ENCODE measurements at regions of chr6 and their contacts with region 1.

Region 1: DNA sequence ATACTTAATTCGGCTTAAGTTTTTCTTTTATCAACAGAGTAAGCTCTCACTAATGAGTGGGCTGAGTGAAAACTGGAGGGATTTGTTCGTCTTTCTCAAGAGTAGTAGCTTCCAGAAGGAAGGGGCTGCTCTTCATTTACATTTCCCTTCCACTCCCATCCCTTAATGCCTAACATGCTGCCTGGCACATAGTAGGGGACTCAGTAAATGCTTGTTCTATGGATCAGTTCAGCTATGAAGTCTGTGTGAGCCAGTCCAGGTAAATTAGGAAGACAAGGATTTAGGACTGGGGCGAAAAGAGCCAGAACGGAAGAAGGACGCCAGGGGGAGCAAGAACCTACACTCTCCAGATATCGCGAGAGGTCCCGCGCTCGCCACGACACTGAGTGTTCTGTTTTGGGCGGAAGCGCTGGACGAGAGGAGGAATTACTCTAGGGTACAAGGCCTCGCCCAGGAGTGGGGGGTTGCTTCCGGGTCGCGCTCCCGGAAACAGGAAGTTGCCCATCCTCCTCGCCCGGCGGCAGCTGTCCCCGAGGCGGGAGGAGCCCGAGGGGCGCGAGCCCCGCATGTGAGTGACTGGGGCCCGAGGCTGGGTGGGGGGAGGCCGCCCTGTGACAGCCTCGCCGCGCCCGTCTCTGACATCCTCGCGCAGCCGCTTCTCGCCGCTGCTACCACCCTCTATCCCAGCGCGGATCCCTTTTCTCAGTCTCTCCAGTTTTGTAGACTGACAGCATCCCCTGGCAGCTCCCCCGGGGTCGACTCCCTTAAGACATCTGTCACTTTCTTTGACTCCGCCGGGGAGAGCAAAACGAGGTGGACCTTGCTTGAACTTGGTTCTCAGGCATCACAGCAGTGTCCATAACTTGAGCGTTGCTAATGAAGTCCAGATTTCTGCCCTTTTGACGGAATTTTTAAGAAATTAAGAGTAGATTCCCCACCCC is at the start of gene C6orf89:
- DNase-seq: peak; percentile 92
- ATAC-seq: peak; percentile 98
- H3K4me3 ChIP-seq: peak within 1 kb of the TSS; percentile 99
- H3K27ac ChIP-seq: peak within 1 kb of the TSS; percentile 77
- H3K4me1 ChIP-seq: no peaks in the 10 kb centered on the region
- H3K27me3 ChIP-seq: no peaks in the 10 kb centered on the region
- CTCF ChIP-seq: peak; percentile 72 to 83 (median 79)
- EP300 ChIP-seq: no peak
- POLR2A ChIP-seq: peak; percentile 88
- RAD21 ChIP-seq: peak; percentile 24; the same call in 1 of the 2 replicates
- polyA plus RNA-seq, gene C6orf89: 10.8 to 11.4 TPM

Region 2: GRCh38 chr6:36874443-36875249 is 11.1 kb before region 1 on chr6 and contains the start of gene PPIL1:
- CTCF ChIA-PET with region 1: interaction called, 93 read pairs
- POLR2A ChIA-PET with region 1: interaction called, 19 read pairs
- RAD21 ChIA-PET with region 1: interaction called, 14 read pairs
- SMC1A ChIA-PET with region 1: interaction called, 52 read pairs
- in situ Hi-C with region 1: no loop called
- intact Hi-C with region 1: no loop called
- DNase-seq: peak; percentile 78
- ATAC-seq: peak; percentile 93
- H3K4me3 ChIP-seq: peak within 1 kb of the TSS; percentile 79
- H3K27ac ChIP-seq: peak within 1 kb of the TSS; percentile 78
- H3K4me1 ChIP-seq: peaks cover 6% of the 10 kb centered on the region; the same call in 1 of the 2 replicates
- H3K27me3 ChIP-seq: no peaks in the 10 kb centered on the region
- CTCF ChIP-seq: no peak
- EP300 ChIP-seq: no peak
- POLR2A ChIP-seq: peak; percentile 81
- RAD21 ChIP-seq: no peak
- polyA plus RNA-seq, gene PPIL1: 74.4 to 95.8 TPM

Region 3: DNA sequence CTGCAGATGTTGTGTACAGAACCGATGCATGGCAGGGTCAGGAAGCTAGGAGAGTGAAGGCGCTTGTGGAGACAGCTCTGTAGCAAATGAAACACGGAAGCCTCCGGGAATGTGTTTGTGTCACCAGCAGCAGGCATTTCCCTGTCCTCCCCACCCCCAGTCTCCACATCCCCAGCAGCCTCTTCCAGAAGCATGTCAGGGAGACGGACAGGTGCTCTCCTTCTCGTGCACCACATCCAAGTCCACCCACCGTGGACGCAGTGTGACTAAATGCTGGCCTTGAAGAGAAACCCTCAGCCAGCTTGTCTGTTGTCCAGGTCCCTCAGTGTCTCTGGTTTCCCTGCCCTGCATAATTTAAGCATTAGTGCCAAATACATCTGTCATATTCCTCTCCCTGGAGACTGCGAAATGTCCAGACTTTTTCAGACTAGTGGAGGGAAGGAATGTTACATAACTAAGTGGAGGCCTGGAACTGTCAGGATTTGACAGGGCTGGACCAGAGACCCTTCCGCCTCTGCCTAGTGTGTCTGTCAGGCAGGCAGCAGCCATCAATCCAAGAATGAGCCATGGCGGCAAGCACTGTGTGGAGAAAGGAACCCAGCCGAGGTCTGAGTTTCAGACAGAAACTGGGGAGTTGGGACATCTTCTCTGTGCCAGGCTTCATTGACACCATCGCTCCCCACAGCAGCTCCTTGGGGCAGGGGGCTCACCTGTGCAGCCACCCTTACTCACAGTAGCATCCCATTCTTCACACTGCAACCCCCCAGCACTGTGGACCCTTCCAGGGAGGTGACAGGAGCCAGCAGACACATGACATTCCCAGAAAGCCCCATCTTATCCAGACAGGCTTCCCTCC is 42.2 kb after region 1 on chr6:
- CTCF ChIA-PET with region 1: interaction called, 3 read pairs
- POLR2A ChIA-PET with region 1: interaction called, 4 read pairs
- RAD21 ChIA-PET with region 1: no interaction called
- SMC1A ChIA-PET with region 1: no interaction called
- in situ Hi-C with region 1: no loop called
- intact Hi-C with region 1: loop called (anchors 1 kb)
- DNase-seq: no peak
- ATAC-seq: no peak
- H3K4me3 ChIP-seq: no peak overlapping the region
- H3K27ac ChIP-seq: no peak overlapping the region
- H3K4me1 ChIP-seq: peaks cover 12% of the 10 kb centered on the region
- H3K27me3 ChIP-seq: no peaks in the 10 kb centered on the region
- CTCF ChIP-seq: no peak
- EP300 ChIP-seq: no peak
- POLR2A ChIP-seq: no peak
- RAD21 ChIP-seq: no peak

Region 4: DNA sequence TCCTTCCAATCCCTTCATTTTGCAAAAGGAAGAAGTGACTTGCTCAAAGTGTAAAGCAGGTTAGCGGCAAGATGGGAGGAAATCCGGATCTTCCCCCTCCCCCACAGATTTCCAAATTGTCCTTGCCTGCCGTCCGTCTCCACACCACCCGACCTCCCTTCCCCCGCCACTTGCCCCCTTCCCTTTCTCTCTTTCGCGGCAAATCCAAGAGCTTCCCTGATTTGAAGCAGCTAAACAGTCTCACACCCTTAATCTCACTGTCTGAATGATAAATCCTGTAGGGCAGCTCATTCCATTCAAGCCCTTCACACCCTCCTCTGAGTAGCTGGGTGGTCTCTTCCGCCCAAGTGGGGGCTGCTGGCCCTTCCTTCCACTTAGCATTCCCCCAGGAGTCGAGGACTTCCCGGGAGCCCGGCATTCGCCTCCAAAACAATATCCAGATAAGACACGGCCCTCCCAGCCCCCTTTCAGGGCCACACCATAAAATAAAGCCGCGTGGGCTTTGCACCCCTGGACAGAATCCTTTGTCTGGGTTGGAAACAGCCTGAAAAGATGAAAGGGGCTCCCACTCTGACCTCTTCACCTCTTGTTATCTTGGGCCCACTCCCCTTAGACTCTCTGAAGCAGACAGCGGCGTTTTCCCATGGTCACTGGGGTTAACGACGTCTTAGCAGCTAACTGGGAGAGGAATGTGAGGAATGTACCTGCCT is 240.2 kb after region 1 on chr6:
- CTCF ChIA-PET with region 1: no interaction called
- POLR2A ChIA-PET with region 1: no interaction called
- RAD21 ChIA-PET with region 1: no interaction called
- SMC1A ChIA-PET with region 1: no interaction called
- in situ Hi-C with region 1: no loop called
- intact Hi-C with region 1: no loop called
- DNase-seq: no peak
- ATAC-seq: no peak
- H3K4me3 ChIP-seq: no peak overlapping the region
- H3K27ac ChIP-seq: no peak overlapping the region
- H3K4me1 ChIP-seq: peaks cover 15% of the 10 kb centered on the region; the same call in 1 of the 2 replicates
- H3K27me3 ChIP-seq: no peaks in the 10 kb centered on the region
- CTCF ChIP-seq: no peak
- EP300 ChIP-seq: no peak
- POLR2A ChIP-seq: no peak
- RAD21 ChIP-seq: no peak

Measured in GM12878 (cell line).